CD4-positive, alpha-beta memory T cell (primary cell): ENCODE measurements at regions of chr3 and their contacts with region 1.

Region 1: GRCh38 chr3:170908235-170909116 is at the start of gene EIF5A2:
- DNase-seq: peak; percentile 92 to 97 (median 95)
- H3K4me3 ChIP-seq: peak within 1 kb of the TSS; percentile 59 to 69
- H3K4me3 Mint-ChIP-seq: peak within 1 kb of the TSS; percentile 94 to 98 (median 97)
- H3K27ac ChIP-seq: peak within 1 kb of the TSS; percentile 59
- H3K27ac Mint-ChIP-seq: peak within 1 kb of the TSS; percentile 86 to 98 (median 97)
- H3K4me1 ChIP-seq: peaks cover 22% of the 10 kb centered on the region
- H3K4me1 Mint-ChIP-seq: peaks cover 11 to 28% (median 19%) of the 10 kb centered on the region in 4 donors
- H3K27me3 ChIP-seq: no peaks in the 10 kb centered on the region
- H3K27me3 Mint-ChIP-seq: no peaks in the 10 kb centered on the region
- total RNA-seq, gene EIF5A2: 11.4 to 12.2 TPM

Region 2: DNA sequence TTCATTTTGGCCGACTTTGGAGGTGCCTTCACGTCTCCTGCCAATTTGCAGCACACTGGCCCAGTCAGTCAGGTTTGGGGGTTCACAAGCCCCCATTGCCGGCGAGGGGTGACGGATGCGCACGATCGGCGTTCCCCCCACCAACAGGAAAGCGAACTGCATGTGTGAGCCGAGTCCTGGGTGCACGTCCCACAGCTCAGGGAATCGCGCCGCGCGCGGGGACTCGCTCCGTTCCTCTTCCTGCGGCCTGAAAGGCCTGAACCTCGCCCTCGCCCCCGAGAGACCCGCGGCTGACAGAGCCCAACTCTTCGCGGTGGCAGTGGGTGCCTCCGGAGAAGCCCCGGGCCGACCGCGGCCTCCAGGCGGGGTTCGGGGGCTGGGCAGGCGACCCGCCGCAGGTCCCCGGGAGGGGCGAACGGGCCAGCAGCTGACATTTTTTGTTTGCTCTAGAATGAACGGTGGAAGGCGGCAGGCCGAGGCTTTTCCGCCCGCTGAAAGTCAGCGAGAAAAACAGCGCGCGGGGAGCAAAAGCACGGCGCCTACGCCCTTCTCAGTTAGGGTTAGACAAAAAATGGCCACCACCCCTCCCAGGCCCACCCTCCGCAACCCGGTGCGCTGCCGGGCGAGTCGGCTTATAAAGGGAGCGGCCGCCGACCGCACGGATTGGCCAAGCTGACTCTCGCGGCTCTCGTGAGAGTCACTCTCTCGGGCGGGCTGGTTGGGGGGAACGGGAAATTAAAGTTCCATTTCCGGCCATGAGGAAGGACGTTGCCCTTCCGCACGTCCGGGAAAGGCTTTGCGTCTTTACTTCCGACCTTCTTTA is 1143.8 kb before region 1 on chr3 and contains the start of gene TERC:
- CTCF ChIA-PET with region 1: no interaction called
- POLR2A ChIA-PET with region 1: interaction called, 8 read pairs
- intact Hi-C with region 1: loop called (anchors 2 kb)
- DNase-seq: peak; percentile 93 to 96 (median 95)
- H3K4me3 ChIP-seq: peak within 1 kb of the TSS; percentile 36 to 70
- H3K4me3 Mint-ChIP-seq: peak within 1 kb of the TSS; percentile 94 to 98 (median 98)
- H3K27ac ChIP-seq: peak within 1 kb of the TSS; percentile 87
- H3K27ac Mint-ChIP-seq: peak within 1 kb of the TSS; percentile 95 to 99 (median 98)
- H3K4me1 ChIP-seq: peaks cover 23% of the 10 kb centered on the region
- H3K4me1 Mint-ChIP-seq: peaks cover 15 to 43% (median 23%) of the 10 kb centered on the region in 4 donors
- H3K27me3 ChIP-seq: no peaks in the 10 kb centered on the region
- H3K27me3 Mint-ChIP-seq: no peaks in the 10 kb centered on the region
- total RNA-seq, gene TERC: 15.6 to 15.7 TPM

Region 3: GRCh38 chr3:169772897-169773828 is 1135.3 kb before region 1 on chr3 and contains the start of gene MYNN:
- CTCF ChIA-PET with region 1: no interaction called
- POLR2A ChIA-PET with region 1: interaction called, 3 read pairs
- intact Hi-C with region 1: loop called (anchors 2 kb)
- DNase-seq: peak; percentile 92 to 95 (median 94)
- H3K4me3 ChIP-seq: peak within 1 kb of the TSS; percentile 83 to 94
- H3K4me3 Mint-ChIP-seq: peak within 1 kb of the TSS; percentile 92 to 99 (median 98)
- H3K27ac ChIP-seq: peak within 1 kb of the TSS; percentile 99
- H3K27ac Mint-ChIP-seq: peak within 1 kb of the TSS; percentile 98 to 100 (median 99)
- H3K4me1 ChIP-seq: peaks cover 36% of the 10 kb centered on the region
- H3K4me1 Mint-ChIP-seq: peaks cover 27 to 70% (median 43%) of the 10 kb centered on the region in 4 donors
- H3K27me3 ChIP-seq: no peaks in the 10 kb centered on the region
- H3K27me3 Mint-ChIP-seq: peaks cover 0 to 11% of the 10 kb centered on the region in 2 donors
- total RNA-seq, gene MYNN: 21.1 to 23.0 TPM

Region 4: DNA sequence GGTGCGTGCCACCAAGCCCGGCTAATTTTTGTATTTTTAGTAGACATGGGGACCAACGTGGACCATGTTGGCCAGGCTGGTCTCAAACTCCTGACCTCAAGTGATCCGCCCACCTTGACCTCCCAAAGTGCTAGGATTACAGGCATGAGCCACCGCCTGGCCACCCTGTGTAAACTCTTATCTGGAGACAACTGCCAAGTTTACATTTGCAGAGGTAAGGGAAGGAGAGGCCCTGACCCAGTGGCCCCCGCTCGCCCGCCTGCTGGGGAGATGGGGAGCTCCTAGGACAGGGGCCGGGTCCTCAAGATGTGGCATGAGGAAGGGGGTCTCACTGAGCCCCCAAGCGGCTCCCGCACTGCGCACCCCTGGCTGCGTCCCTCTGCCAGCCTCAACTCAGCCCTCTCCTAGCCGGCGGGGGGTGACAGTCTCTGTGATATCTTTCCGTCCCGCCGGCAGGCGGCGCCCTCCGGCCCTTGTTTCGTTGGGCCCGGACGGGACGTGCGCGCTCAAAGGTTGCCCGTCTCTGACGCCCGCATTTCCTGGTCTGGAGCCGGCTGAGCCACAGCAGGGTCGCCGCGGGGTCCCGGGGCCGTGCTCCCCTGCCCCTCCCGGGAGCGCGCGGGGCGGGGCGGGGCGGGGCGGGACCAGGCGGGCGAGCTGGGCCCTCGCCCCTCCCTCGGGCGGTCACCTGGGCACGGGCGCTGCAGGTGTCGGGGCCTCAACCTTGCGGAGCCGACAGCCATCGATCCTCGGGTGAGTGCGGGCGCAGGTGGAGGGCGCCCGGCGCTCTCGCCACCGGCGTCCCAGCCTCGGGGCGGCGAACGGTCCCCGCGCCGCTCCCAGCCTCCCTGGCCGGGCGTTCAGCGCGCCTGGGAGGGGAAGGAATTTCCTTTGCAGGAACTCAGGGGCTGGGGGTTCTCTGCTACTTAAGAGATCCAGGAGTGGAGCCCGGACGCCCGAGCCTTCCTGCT is 870.7 kb before region 1 on chr3 and contains the start of gene GPR160:
- CTCF ChIA-PET with region 1: no interaction called
- POLR2A ChIA-PET with region 1: no interaction called
- intact Hi-C with region 1: loop called (anchors 10 kb)
- DNase-seq: peak; percentile 75 to 82 (median 79)
- H3K4me3 ChIP-seq: peak within 1 kb of the TSS; percentile 39 to 77
- H3K4me3 Mint-ChIP-seq: peak within 1 kb of the TSS; percentile 84 to 92 (median 88)
- H3K27ac ChIP-seq: peak within 1 kb of the TSS; percentile 41
- H3K27ac Mint-ChIP-seq: peak within 1 kb of the TSS; percentile 25 to 90 (median 79)
- H3K4me1 ChIP-seq: peaks cover 21% of the 10 kb centered on the region
- H3K4me1 Mint-ChIP-seq: peaks cover 16 to 38% (median 29%) of the 10 kb centered on the region in 4 donors
- H3K27me3 ChIP-seq: no peaks in the 10 kb centered on the region
- H3K27me3 Mint-ChIP-seq: no peaks in the 10 kb centered on the region
- total RNA-seq, gene GPR160: 13.1 to 14.9 TPM

Region 5: GRCh38 chr3:170357176-170357919 is 551.1 kb before region 1 on chr3 and contains the start of gene SKIL:
- CTCF ChIA-PET with region 1: no interaction called
- POLR2A ChIA-PET with region 1: interaction called, 6 read pairs
- intact Hi-C with region 1: loop called (anchors 5 kb)
- DNase-seq: peak; percentile 96 to 98 (median 97)
- H3K4me3 ChIP-seq: peak within 1 kb of the TSS; percentile 57 to 62
- H3K4me3 Mint-ChIP-seq: peak within 1 kb of the TSS; percentile 90 to 99 (median 93)
- H3K27ac ChIP-seq: peak within 1 kb of the TSS; percentile 88
- H3K27ac Mint-ChIP-seq: peak within 1 kb of the TSS; percentile 95 to 99 (median 98)
- H3K4me1 ChIP-seq: peaks cover 32% of the 10 kb centered on the region
- H3K4me1 Mint-ChIP-seq: peaks cover 31 to 72% (median 43%) of the 10 kb centered on the region in 4 donors
- H3K27me3 ChIP-seq: no peaks in the 10 kb centered on the region
- H3K27me3 Mint-ChIP-seq: no peaks in the 10 kb centered on the region
- total RNA-seq, gene SKIL: 59.3 to 60.4 TPM

Region 6: DNA sequence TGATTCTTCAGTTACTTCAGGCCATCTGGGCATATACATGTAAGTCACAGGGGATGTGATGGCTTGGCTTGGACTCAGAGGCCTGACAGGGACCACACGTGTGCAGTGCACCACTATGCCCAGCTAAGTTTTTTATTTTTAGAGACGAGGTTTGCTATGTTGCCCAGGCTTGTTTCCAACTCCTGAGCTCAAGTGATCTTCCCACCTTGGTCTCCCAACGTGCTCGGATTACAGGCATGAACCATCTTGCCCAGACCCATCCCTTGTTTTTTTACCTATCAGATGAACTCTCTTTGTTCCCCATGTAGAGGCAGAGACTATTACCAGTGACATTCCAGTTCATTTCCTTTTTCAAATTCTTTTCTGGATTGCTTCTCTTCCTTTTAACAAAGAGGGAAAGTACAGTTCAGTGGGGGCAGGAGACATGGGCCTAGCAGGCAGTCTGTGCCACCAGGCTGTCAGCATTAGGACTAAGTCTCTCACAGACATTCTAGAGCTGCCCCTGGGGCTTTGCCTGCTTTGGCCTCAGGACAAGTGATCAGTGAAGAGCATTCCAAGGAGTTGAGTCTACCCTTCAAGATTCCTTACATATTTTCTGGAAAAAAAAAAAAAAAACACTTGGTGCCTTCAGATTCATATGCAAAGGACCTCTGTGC is 219.1 kb before region 1 on chr3:
- CTCF ChIA-PET with region 1: no interaction called
- POLR2A ChIA-PET with region 1: no interaction called
- intact Hi-C with region 1: no loop called
- DNase-seq: no peak
- H3K4me3 ChIP-seq: no peak overlapping the region
- H3K4me3 Mint-ChIP-seq: no peak overlapping the region
- H3K27ac ChIP-seq: no peak overlapping the region
- H3K27ac Mint-ChIP-seq: no peak overlapping the region
- H3K4me1 ChIP-seq: no peaks in the 10 kb centered on the region
- H3K4me1 Mint-ChIP-seq: no peaks in the 10 kb centered on the region
- H3K27me3 ChIP-seq: no peaks in the 10 kb centered on the region
- H3K27me3 Mint-ChIP-seq: no peaks in the 10 kb centered on the region

Region 7: GRCh38 chr3:170869645-170870593 is 38.6 kb before region 1 on chr3 and contains the start of gene RPL22L1:
- CTCF ChIA-PET with region 1: interaction called, 14 read pairs
- POLR2A ChIA-PET with region 1: interaction called, 60 read pairs
- intact Hi-C with region 1: loop called (anchors 1 kb)
- DNase-seq: peak; percentile 92 to 94 (median 94)
- H3K4me3 ChIP-seq: peak within 1 kb of the TSS; percentile 76 to 92
- H3K4me3 Mint-ChIP-seq: peak within 1 kb of the TSS; percentile 91 to 98 (median 96)
- H3K27ac ChIP-seq: peak within 1 kb of the TSS; percentile 82
- H3K27ac Mint-ChIP-seq: peak within 1 kb of the TSS; percentile 92 to 99 (median 98)
- H3K4me1 ChIP-seq: peaks cover 34% of the 10 kb centered on the region
- H3K4me1 Mint-ChIP-seq: peaks cover 12 to 36% (median 24%) of the 10 kb centered on the region in 4 donors
- H3K27me3 ChIP-seq: no peaks in the 10 kb centered on the region
- H3K27me3 Mint-ChIP-seq: no peaks in the 10 kb centered on the region
- total RNA-seq, gene RPL22L1: 31.9 to 32.3 TPM

Region 8: GRCh38 chr3:170918715-170919114 is 10.2 kb after region 1 on chr3:
- CTCF ChIA-PET with region 1: no interaction called
- POLR2A ChIA-PET with region 1: no interaction called
- intact Hi-C with region 1: no loop called
- DNase-seq: no peak
- H3K4me3 ChIP-seq: no peak overlapping the region
- H3K4me3 Mint-ChIP-seq: no peak overlapping the region
- H3K27ac ChIP-seq: no peak overlapping the region
- H3K27ac Mint-ChIP-seq: no peak overlapping the region
- H3K4me1 ChIP-seq: no peaks in the 10 kb centered on the region
- H3K4me1 Mint-ChIP-seq: no peaks in the 10 kb centered on the region
- H3K27me3 ChIP-seq: no peaks in the 10 kb centered on the region
- H3K27me3 Mint-ChIP-seq: peaks cover 9 to 10% of the 10 kb centered on the region in 2 donors

Region 9: GRCh38 chr3:171736556-171736955 is 828.1 kb after region 1 on chr3:
- CTCF ChIA-PET with region 1: no interaction called
- POLR2A ChIA-PET with region 1: no interaction called
- intact Hi-C with region 1: no loop called
- DNase-seq: no peak
- H3K4me3 ChIP-seq: no peak overlapping the region
- H3K4me3 Mint-ChIP-seq: no peak overlapping the region
- H3K27ac ChIP-seq: no peak overlapping the region
- H3K27ac Mint-ChIP-seq: no peak overlapping the region
- H3K4me1 ChIP-seq: no peaks in the 10 kb centered on the region
- H3K4me1 Mint-ChIP-seq: no peaks in the 10 kb centered on the region
- H3K27me3 ChIP-seq: no peaks in the 10 kb centered on the region
- H3K27me3 Mint-ChIP-seq: peaks cover 0 to 2% of the 10 kb centered on the region in 2 donors

Region 10: GRCh38 chr3:172750368-172751174 is 1842.1 kb after region 1 on chr3 and contains the start of gene ECT2:
- CTCF ChIA-PET with region 1: no interaction called
- POLR2A ChIA-PET with region 1: no interaction called
- intact Hi-C with region 1: loop called (anchors 5 kb)
- DNase-seq: peak; percentile 94 to 99 (median 97)
- H3K4me3 ChIP-seq: peak within 1 kb of the TSS; percentile 73 to 76
- H3K4me3 Mint-ChIP-seq: peak within 1 kb of the TSS; percentile 94 to 99 (median 98)
- H3K27ac ChIP-seq: peak within 1 kb of the TSS; percentile 65
- H3K27ac Mint-ChIP-seq: peak within 1 kb of the TSS; percentile 84 to 96 (median 94)
- H3K4me1 ChIP-seq: peaks cover 26% of the 10 kb centered on the region
- H3K4me1 Mint-ChIP-seq: peaks cover 19 to 38% (median 27%) of the 10 kb centered on the region in 4 donors
- H3K27me3 ChIP-seq: no peaks in the 10 kb centered on the region
- H3K27me3 Mint-ChIP-seq: no peaks in the 10 kb centered on the region
- total RNA-seq, gene ECT2: 2.4 to 2.9 TPM